ENCODE measurements at regions of chr10 and their contacts with region 1.

Region 1: DNA sequence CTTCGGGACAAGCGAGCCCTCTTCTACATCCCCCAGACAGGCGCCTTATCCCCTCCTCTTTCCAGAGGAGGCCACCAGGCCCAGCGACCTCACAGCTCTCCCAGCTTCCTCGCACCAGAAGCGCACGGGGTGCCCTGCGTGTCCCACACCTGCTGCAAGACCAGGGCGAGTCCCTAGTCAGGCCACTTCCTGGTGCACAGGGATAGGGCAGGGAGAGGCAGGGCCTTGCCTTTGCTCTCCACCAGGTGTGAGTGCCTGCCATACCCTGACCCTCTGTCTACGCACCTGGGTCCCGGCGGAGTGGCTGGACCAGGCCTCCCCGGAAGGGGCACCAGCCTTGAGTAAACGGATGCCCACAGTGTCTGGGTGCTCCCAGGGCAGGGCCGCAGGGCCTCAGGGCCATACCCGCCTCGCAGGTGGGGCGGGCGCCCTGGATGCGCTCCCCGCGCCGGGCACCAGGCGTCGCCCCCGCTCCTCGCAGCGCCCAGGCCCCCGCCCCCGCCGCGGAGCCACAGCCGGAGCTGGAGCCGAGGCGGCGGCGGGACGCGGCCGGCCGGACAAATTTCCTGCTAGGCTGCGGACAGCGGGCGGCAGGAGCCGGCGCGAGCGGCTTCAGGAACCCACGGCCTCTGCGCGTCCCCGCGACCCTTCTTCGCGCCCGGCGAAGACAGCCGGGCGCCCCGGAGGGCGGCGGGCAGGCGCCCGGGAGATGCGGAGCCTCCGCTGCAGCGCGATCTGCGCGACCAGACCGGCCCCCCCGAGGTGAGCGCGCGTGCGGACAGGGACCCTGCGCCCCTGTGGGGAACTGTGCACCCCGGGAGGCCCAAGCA is at the start of gene PTPRE:
- ATAC-seq: peak; percentile 83 to 99 (median 88)
- H3K4me3 ChIP-seq: peak within 1 kb of the TSS; percentile 40 to 66 (median 52)
- H3K27ac ChIP-seq: peak within 1 kb of the TSS in 1 of 2 donors; percentile 27
- H3K4me1 ChIP-seq: peaks cover 13 to 23% of the 10 kb centered on the region in 2 donors
- total RNA-seq, gene PTPRE: 0.09 to 17.6 (median 3.9) TPM

Region 2: DNA sequence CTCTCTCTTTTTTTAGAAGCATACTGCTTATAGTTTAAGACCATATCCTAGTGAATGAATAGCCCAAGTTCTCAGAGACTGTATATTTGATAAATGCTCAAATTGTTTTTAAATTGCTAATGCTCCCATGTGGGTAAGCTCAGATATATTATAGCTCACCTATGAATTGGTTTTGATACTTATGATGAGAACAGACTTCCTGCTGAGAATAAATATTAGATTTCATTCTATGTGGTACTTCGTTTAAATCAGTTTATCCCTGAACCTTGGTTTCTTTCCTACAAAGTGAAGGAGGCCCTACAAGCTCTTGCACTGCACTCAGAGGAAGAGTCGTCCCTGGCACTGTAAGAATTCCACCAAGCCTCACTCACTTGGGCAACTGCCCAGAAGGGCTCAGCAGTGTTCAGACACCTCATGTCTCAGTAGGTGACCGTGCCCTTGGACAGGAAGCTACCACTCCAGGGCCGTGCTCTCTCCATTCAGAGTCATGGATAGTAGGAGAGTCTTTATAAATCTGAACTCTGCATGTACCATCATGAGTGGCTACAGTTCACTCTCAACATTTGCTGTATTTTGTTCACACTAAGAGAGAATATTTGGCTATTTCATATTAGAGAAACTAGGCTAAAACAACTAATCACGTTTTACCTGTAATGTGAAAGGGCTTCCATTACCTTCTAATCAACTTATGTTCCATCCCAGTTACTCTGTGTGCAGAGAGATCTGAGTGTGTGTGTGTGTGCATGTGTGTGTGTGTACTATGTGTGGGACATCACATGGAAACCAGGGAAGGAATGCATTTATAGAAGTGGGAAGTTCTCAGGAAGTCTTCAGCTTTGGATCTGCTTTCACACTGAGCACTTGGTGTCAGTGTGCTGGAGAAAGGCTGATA is 94.0 kb after region 1 on chr10:
- in situ Hi-C with region 1: loop called in 4 of 9 experiments (anchors 10 to 25 kb)
- ATAC-seq: peak in 1 of 8 experiments; percentile 4
- H3K4me3 ChIP-seq: peak overlapping the region in 2 of 5 donors; percentile 20 to 23
- H3K27ac ChIP-seq: peak overlapping the region in 1 of 2 donors; percentile 69
- H3K4me1 ChIP-seq: peaks cover 67 to 78% of the 10 kb centered on the region in 2 donors

Region 3: DNA sequence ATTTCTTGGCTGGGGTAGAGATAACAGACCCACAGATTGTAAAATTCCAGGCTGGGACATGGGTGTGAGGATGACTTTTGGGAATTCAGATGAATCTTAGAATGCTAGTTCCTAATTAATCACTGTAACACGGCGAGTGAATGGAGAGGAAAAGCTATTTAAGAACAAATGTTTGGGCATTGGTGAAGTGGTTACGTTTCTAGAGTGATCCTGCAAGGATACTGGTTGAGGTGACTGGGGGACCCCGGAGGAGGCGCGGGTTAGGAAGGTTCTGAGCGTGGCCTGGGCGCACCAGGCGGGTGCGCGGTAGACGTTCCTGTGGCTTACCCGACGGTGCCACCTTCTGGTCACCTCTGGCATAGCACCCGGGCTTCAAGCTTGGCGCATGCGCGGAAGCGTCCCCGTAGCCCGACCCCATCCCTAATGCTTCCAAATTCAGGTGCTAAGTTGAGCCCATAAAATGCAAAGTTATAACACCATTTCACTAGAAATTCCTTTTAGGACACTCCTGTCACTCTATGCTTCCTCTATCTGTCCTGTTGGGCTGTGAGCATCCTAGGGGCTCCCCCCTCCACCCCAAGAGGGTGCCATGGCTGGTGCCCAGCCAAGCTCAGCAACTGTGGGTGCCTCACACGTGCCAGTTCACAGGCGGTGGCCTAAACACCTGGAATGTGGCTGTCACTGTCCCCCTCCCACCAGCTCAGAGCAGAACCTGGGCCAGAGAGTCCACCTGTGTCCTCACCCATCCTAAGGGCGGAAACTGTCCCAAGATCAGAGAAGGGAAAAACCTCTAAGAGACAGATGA is 104.6 kb after region 1 on chr10:
- in situ Hi-C with region 1: loop called in 6 of 9 experiments (anchors 5 to 25 kb)
- ATAC-seq: peak; percentile 70 to 94 (median 74)
- H3K4me3 ChIP-seq: no peak overlapping the region
- H3K27ac ChIP-seq: no peak overlapping the region
- H3K4me1 ChIP-seq: peaks cover 21% of the 10 kb centered on the region in 2 donors

Region 4: GRCh38 chr10:128018236-128018635 is 111.5 kb after region 1 on chr10:
- in situ Hi-C with region 1: loop called in 5 of 9 experiments (anchors 5 to 25 kb)
- ATAC-seq: peak in 3 of 8 experiments; percentile 27 to 61 (median 28)
- H3K4me3 ChIP-seq: no peak overlapping the region
- H3K27ac ChIP-seq: no peak overlapping the region
- H3K4me1 ChIP-seq: peaks cover 0 to 3% of the 10 kb centered on the region in 2 donors

Region 5: GRCh38 chr10:128031216-128031615 is 124.5 kb after region 1 on chr10:
- in situ Hi-C with region 1: no loop called
- ATAC-seq: no peak
- H3K4me3 ChIP-seq: no peak overlapping the region
- H3K27ac ChIP-seq: no peak overlapping the region
- H3K4me1 ChIP-seq: peaks cover 4 to 16% of the 10 kb centered on the region in 2 donors

Region 6: DNA sequence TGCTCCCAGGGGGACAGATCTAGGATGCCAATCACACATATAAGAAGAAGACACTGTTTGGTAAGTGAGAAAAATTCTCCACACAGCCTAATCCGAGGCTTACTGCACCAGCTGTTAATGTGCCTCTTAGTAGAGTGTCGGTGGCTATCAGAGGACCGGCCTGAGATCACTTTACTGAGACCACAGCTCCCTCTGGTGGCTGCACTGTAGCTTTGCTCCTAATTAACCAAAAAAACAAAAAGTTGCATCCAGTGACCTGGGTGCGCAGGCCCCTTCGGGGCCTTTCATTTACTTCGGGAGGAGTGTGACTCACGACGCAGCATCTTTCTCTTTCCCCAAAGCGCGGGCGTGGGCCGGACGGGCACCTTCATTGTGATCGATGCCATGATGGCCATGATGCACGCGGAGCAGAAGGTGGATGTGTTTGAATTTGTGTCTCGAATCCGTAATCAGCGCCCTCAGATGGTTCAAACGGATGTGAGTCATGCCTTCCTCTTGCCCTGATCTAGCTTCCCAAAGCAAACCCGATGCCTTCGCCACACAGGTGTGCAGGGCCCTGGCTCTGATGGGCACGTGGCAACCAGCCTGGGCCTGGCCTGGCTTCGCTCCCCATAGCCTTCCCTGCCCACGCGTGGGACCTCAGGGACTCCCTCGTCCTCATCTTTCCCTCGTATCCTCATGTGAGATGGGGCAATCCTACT is 162.7 kb after region 1 on chr10:
- in situ Hi-C with region 1: loop called in 1 of 9 experiments (anchors 10 kb)
- ATAC-seq: peak; percentile 42 to 90 (median 80)
- H3K4me3 ChIP-seq: no peak overlapping the region
- H3K27ac ChIP-seq: no peak overlapping the region
- H3K4me1 ChIP-seq: no peaks in the 10 kb centered on the region

Measured in motor neuron (in vitro differentiated cells).